ENCODE measurements at regions of chr20 and their contacts with region 1.

Region 1: GRCh38 chr20:34190679-34191090 is 50.5 kb upstream of the ASIP start:
- DNase-seq: peak; percentile 38
- ATAC-seq: peak; percentile 98
- H3K4me3 ChIP-seq: no peak overlapping the region
- H3K27ac ChIP-seq: no peak overlapping the region
- H3K4me1 ChIP-seq: no peaks in the 10 kb centered on the region
- H3K27me3 ChIP-seq: peaks cover 15% of the 10 kb centered on the region; the same call in 1 of the 2 replicates
- CTCF ChIP-seq: peak; percentile 86

Region 2: GRCh38 chr20:34172926-34173325 is 17.8 kb before region 1 on chr20:
- CTCF ChIA-PET with region 1: interaction called, 11 read pairs
- POLR2A ChIA-PET with region 1: no interaction called
- in situ Hi-C with region 1: no loop called
- intact Hi-C with region 1: no loop called
- DNase-seq: no peak
- ATAC-seq: no peak
- H3K4me3 ChIP-seq: no peak overlapping the region
- H3K27ac ChIP-seq: no peak overlapping the region
- H3K4me1 ChIP-seq: no peaks in the 10 kb centered on the region
- H3K27me3 ChIP-seq: 0 out of 2 replicates have a peak, but pooled peaks cover 3% of the 10 kb centered on the region
- CTCF ChIP-seq: no peak

Region 3: GRCh38 chr20:34292128-34292895 is 101.6 kb after region 1 on chr20:
- CTCF ChIA-PET with region 1: no interaction called
- POLR2A ChIA-PET with region 1: no interaction called
- in situ Hi-C with region 1: no loop called
- intact Hi-C with region 1: no loop called
- DNase-seq: no peak
- ATAC-seq: no peak
- H3K4me3 ChIP-seq: no peak overlapping the region
- H3K27ac ChIP-seq: no peak overlapping the region
- H3K4me1 ChIP-seq: no peaks in the 10 kb centered on the region
- H3K27me3 ChIP-seq: no peaks in the 10 kb centered on the region
- CTCF ChIP-seq: no peak

Region 4: DNA sequence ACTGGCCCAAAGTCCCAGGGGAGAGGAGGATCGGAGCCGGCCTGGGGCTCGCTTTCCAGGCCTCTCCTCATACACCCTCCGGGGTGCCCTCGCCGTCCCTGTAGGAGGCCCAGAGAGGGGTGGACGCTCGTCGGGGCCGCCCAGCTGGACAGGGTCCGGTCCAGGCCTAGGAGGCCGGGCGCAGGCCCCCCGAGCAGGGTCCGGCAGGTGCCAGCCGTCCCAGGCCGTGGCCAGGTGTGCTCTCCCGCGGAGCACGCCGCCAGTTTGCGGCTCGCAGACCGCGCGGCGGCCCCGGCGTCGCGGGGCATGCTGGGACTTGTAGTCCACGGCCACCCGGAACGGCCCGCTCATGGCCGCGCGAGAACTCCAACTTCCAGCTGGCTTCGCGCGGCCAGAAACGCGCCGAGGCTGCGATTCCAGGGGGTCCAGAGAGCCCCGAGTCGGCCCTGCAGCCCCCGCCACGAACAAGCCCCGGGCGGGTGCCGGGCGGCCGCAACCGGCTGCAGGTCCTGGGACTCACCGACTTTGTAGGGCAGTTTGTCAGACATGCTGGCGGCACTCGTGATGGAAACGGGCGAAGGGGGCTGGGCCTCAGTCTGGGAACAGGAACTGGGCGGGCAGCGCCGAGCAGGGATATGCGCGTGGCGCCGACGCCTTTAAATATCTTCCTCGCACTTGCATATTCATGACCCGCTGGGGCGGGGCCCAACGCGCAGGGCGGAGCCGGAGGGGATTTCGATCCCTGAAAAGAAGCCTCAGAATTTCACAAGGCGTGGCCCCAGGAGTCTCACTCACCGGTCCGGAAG is 112.2 kb after region 1 on chr20 and contains the start of gene AHCY:
- CTCF ChIA-PET with region 1: no interaction called
- POLR2A ChIA-PET with region 1: no interaction called
- in situ Hi-C with region 1: no loop called
- intact Hi-C with region 1: loop called (anchors 10 kb)
- DNase-seq: peak; percentile 92
- ATAC-seq: peak; percentile 98
- H3K4me3 ChIP-seq: peak within 1 kb of the TSS; percentile 81 to 97
- H3K27ac ChIP-seq: peak within 1 kb of the TSS; percentile 94
- H3K4me1 ChIP-seq: peaks cover 25% of the 10 kb centered on the region
- H3K27me3 ChIP-seq: no peaks in the 10 kb centered on the region
- CTCF ChIP-seq: no peak
- total RNA-seq, gene AHCY: 171 TPM